PC-3 (cell line): ENCODE measurements at regions of chr2 and their contacts with region 1.

Region 1: DNA sequence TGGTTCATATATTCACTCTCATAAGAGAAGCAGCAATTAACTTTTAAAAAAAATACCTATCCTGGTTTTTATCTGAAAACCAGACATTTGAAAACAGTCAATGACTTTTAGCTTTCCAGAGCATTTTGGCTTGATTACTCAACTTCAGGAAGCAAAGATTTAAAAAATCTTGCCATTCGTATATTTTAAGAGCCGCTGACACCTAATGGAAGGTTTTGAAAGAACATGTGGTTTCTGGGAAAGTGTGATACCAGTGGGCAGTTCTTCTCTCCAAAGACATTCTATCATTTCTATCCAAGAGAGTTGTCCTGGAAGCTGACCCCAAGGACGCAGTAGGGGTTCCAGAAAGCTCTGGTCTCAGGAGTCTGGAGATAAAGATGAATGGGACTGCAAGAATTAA is 234.7 kb downstream of the TTC32 start:
- DNase-seq: peak; percentile 75
- ATAC-seq: peak; percentile 58
- H3K4me3 ChIP-seq: no peak overlapping the region
- H3K27ac ChIP-seq: no peak overlapping the region
- H3K4me1 ChIP-seq: peaks cover 26% of the 10 kb centered on the region
- H3K27me3 ChIP-seq: no peaks in the 10 kb centered on the region
- CTCF ChIP-seq: peak; percentile 74

Region 2: DNA sequence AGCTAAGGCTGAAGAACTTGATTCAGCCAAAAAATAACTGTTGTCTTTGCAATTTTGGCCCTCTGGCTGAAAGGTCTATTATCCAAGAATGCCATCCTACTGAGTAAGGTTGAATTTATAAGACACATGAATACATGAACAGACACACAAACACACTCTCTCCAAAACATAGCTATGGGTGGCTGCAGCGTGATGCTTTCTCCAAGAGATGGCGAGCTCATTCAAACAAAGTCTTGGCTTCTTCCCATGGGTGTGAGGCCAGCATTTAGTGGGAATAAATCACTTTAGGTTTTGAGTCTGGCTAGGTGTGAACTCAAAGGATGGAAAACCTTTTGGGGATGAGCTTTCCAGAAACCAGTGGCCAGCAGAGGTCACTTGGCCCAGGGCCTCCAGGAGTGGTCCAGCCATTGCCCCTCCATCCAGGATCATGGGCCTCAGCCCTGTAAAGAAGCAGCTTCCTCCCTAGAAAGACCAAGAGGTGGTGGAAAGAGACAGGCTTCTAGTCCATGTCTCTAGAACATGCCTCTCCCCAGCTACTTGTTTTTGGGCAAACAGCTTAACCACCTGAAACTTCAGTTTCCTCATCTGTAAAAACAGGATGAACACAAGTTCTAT is 297.6 kb before region 1 on chr2:
- CTCF ChIA-PET with region 1: interaction called, 5 read pairs
- POLR2A ChIA-PET with region 1: no interaction called
- intact Hi-C with region 1: loop called (anchors 1 kb)
- DNase-seq: peak; percentile 68
- ATAC-seq: peak; percentile 74
- H3K4me3 ChIP-seq: no peak overlapping the region
- H3K27ac ChIP-seq: no peak overlapping the region
- H3K4me1 ChIP-seq: no peaks in the 10 kb centered on the region
- H3K27me3 ChIP-seq: no peaks in the 10 kb centered on the region
- CTCF ChIP-seq: peak; percentile 83

Region 3: DNA sequence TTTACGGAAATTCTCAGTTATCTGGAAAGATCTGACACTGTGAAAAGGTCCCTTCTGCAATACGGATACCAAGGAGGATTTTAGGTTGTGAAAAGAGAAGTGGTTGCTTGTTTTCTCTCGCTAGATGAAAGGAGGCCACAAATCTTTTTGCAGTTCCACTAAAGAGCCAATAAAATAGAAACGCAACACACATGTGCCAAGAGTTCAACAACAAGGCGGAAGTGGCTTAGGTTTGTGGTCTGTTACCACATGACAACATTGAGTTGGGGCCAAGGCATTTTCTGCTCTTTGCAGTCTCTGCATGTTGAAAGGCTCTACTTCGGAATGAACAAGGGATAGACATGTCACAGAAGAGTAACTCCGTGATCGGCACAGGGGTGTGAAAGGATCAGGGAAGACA is 193.0 kb before region 1 on chr2:
- CTCF ChIA-PET with region 1: no interaction called
- POLR2A ChIA-PET with region 1: no interaction called
- intact Hi-C with region 1: loop called (anchors 10 kb)
- DNase-seq: peak; percentile 60
- ATAC-seq: no peak
- H3K4me3 ChIP-seq: no peak overlapping the region
- H3K27ac ChIP-seq: no peak overlapping the region
- H3K4me1 ChIP-seq: peaks cover 12% of the 10 kb centered on the region
- H3K27me3 ChIP-seq: no peaks in the 10 kb centered on the region
- CTCF ChIP-seq: no peak

Region 4: DNA sequence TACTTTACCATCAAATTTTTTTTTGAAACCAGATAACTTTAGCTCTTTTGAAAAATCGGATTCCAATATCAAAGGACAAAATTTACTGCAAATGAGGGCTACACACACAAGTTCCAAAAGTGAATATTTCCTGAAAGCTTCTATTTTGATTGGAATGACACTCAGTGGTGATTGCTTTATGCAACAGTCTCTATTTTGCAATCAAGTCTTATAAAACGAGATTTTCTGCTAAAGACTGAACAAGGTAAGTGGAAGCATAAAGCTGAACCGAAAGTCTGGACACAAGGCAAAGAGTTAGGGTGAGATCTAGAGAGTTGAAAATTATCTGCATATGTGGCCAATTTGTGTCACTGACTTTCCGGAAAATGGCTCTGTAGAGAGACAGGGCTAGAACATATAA is 163.7 kb before region 1 on chr2:
- CTCF ChIA-PET with region 1: no interaction called
- POLR2A ChIA-PET with region 1: no interaction called
- intact Hi-C with region 1: no loop called
- DNase-seq: no peak
- ATAC-seq: no peak
- H3K4me3 ChIP-seq: no peak overlapping the region
- H3K27ac ChIP-seq: no peak overlapping the region
- H3K4me1 ChIP-seq: peaks cover 18% of the 10 kb centered on the region
- H3K27me3 ChIP-seq: no peaks in the 10 kb centered on the region
- CTCF ChIP-seq: no peak

Region 5: GRCh38 chr2:19568809-19569791 is 98.0 kb before region 1 on chr2:
- CTCF ChIA-PET with region 1: no interaction called
- POLR2A ChIA-PET with region 1: no interaction called
- intact Hi-C with region 1: loop called (anchors 2 kb)
- DNase-seq: peak; percentile 84
- ATAC-seq: peak; percentile 96
- H3K4me3 ChIP-seq: peak overlapping the region; percentile 20; the same call in 1 of the 2 replicates
- H3K27ac ChIP-seq: peak overlapping the region; percentile 76
- H3K4me1 ChIP-seq: peaks cover 15% of the 10 kb centered on the region
- H3K27me3 ChIP-seq: no peaks in the 10 kb centered on the region
- CTCF ChIP-seq: no peak

Region 6: DNA sequence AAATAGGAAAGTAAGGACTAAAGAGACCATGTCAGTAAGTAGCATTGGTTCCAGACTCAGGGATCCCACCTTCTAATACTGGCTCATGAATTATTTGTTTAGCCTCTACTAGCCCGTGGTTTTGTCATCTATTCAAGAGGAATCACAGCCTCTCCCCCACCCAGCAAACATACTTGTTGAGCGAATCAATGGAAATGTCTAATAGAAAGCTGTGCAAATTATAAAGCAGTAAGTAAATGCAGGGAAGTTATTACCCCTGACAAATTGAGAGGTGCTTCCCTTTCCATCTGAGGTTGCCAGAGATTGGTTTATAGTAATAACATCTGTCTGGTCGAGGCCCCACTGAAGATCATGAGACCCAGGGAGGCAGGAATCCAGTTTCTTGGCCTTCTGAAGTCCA is 89.4 kb before region 1 on chr2:
- CTCF ChIA-PET with region 1: no interaction called
- POLR2A ChIA-PET with region 1: no interaction called
- intact Hi-C with region 1: loop called (anchors 2 kb)
- DNase-seq: peak; percentile 74
- ATAC-seq: peak; percentile 65
- H3K4me3 ChIP-seq: peak overlapping the region; percentile 10; the same call in 1 of the 2 replicates
- H3K27ac ChIP-seq: peak overlapping the region; percentile 53
- H3K4me1 ChIP-seq: peaks cover 57% of the 10 kb centered on the region
- H3K27me3 ChIP-seq: no peaks in the 10 kb centered on the region
- CTCF ChIP-seq: no peak

Region 7: DNA sequence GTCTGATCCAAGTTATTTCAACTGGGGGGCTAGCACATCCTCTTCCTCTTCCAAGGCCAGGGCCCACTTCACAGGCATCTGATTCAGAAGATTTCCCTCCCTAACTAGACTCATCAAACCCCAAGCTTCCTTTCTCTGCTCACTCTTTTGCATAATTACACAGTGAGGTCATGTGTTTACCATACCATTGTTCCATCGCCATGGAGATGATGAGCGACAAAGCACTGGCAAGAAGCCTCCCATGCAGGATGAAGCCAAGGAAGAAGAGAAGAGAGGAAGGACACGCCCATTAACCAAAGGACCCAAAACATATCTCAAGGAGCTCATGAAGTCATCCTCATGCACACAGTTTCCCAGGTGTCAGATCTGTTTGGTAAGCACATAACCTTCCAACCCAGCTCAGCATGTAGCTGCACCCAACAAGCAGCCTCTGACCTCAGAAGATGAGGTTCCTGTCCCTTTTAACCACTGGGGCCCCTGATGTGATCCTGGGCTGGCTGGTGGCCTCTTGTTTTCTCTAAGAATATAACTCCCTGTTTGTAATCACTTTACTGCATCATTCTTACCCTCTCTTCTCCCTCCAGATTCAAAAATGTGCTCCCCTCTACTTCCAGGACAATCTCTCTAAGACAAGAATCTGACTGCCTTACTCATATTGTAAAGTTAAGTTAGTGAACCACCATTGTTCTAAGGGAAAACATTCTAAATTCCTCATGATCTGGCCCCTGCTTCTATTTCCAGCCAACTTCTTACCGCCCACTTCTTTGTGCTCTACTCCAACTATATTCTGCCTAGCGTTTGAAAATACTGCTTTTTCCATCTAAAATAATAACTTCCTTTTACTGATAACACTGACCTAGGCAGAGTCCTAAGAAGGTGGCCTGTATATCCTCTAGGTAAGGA is 44.6 kb after region 1 on chr2:
- CTCF ChIA-PET with region 1: no interaction called
- POLR2A ChIA-PET with region 1: no interaction called
- intact Hi-C with region 1: no loop called
- DNase-seq: peak; percentile 96
- ATAC-seq: peak; percentile 92
- H3K4me3 ChIP-seq: no peak overlapping the region
- H3K27ac ChIP-seq: peak overlapping the region; percentile 64
- H3K4me1 ChIP-seq: peaks cover 12% of the 10 kb centered on the region
- H3K27me3 ChIP-seq: no peaks in the 10 kb centered on the region
- CTCF ChIP-seq: no peak